Caco-2 (cell line): ENCODE measurements at regions of chr4 and their contacts with region 1.

Region 1: DNA sequence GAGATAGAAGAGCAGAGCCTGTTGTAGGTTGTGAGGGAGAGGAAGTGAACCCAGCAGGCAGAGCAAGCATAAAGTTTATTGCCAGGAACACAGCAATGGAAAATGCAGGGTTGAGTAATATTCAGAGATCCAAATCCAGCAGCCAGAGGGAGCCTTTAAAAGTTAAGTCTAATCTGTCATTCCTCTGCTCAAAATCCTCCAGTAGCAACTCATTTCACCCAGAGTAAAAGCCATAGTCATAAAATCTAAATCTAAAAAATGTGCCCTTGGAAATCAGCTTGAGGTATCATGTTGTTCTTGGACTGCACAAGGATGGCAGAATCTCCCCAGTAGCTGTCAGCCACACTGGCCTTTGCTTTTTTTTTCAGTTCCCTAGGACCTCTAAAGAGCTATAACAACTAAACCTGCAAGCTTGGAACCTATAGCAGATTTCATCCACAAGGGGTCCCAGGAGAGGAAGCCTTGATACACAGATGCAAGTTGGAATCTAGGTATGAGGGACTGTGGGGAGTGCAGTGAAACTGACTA is 62.9 kb upstream of the FRAS1 start:
- DNase-seq: peak; percentile 70 to 77
- H3K4me3 ChIP-seq: no peak overlapping the region
- H3K4me3 Mint-ChIP-seq: no peak overlapping the region
- H3K27ac Mint-ChIP-seq: no peak overlapping the region
- H3K4me1 ChIP-seq: peaks cover 5% of the 10 kb centered on the region
- H3K4me1 Mint-ChIP-seq: peaks cover 14% of the 10 kb centered on the region
- H3K27me3 ChIP-seq: no peaks in the 10 kb centered on the region
- H3K27me3 Mint-ChIP-seq: no peaks in the 10 kb centered on the region
- CTCF ChIP-seq: peak; percentile 71

Region 2: DNA sequence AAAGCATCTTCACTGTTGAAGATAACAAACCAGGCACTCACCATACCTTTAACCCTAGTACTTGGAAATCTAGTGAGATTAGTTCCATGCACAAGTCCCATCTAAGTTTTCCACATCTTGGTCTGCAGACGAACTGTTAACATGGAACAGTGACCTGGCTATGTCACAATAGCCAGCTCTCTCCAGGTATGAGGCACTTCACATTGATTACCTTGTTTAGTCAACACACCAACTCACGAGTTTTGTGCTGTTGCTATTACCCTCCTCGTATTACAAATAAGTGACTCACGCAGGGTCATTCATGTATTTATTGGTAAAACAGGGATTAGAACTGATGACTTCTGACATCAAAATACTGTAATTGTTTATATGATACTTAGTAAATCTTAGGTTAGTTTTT is 26.4 kb after region 1 on chr4:
- CTCF ChIA-PET with region 1: no interaction called
- POLR2A ChIA-PET with region 1: no interaction called
- intact Hi-C with region 1: loop called (anchors 2 kb)
- DNase-seq: no peak
- H3K4me3 ChIP-seq: no peak overlapping the region
- H3K4me3 Mint-ChIP-seq: no peak overlapping the region
- H3K27ac Mint-ChIP-seq: no peak overlapping the region
- H3K4me1 ChIP-seq: no peaks in the 10 kb centered on the region
- H3K4me1 Mint-ChIP-seq: peaks cover under 1% of the 10 kb centered on the region
- H3K27me3 ChIP-seq: no peaks in the 10 kb centered on the region
- H3K27me3 Mint-ChIP-seq: peaks cover 2% of the 10 kb centered on the region
- CTCF ChIP-seq: no peak

Region 3: DNA sequence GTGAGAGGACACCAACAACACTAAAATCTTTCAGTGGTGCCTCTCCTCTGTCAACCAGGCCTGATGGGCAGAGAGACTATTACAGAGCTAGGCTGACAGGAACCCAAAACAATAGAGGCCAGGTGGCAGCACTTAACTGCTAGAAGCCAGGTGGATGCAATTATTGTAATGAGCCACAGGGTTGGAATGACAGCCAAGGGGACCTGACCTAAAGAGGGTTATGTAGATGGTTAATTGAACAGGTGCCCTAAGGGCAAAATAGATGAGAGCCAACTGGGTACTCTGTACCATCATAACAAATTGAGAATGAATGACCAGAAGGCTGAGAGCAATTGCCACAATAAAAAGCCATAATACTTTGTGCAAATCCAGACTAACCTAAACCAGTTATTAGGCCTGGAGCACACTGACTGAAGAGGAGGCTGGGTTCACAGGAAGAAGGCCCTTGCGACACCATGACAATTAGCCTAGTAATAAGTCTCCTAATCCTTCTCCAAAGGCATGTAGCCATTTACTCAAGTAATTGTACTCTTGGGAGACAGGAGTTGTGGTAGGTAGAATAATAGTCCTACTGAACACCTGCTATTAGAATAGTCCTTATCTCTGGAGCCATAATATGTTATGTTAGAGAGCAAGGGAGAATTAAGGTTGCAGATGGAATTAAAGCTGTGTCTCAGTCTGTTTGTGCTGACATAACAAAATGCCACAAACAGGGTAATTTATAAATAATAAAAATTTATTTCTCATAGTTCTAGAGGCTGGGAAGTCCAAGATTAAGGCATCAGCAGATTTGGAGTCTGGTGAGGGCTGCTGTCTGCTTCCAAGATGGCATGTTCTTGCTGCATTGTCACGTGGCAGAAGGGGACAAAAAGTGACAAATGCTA is 38.4 kb after region 1 on chr4:
- CTCF ChIA-PET with region 1: no interaction called
- POLR2A ChIA-PET with region 1: no interaction called
- intact Hi-C with region 1: no loop called
- DNase-seq: no peak
- H3K4me3 ChIP-seq: no peak overlapping the region
- H3K4me3 Mint-ChIP-seq: no peak overlapping the region
- H3K27ac Mint-ChIP-seq: no peak overlapping the region
- H3K4me1 ChIP-seq: no peaks in the 10 kb centered on the region
- H3K4me1 Mint-ChIP-seq: no peaks in the 10 kb centered on the region
- H3K27me3 ChIP-seq: no peaks in the 10 kb centered on the region
- H3K27me3 Mint-ChIP-seq: no peaks in the 10 kb centered on the region
- CTCF ChIP-seq: no peak